Activated CD4-positive, alpha-beta memory T cell treated with anti-CD3 and anti-CD28 coated beads, Interleukin-2, amount 10 ng/mL, durations not matched to agents 7 days and 5 days (primary cell): ENCODE measurements at regions of chr20 and their contacts with region 1.

Region 1: GRCh38 chr20:35994994-35995453 is 26.6 kb downstream of the CNBD2 start:
- DNase-seq: peak; percentile 78
- H3K4me3 Mint-ChIP-seq: no peak overlapping the region
- H3K27ac Mint-ChIP-seq: no peak overlapping the region
- H3K4me1 Mint-ChIP-seq: peaks cover 6% of the 10 kb centered on the region
- H3K27me3 Mint-ChIP-seq: peaks cover 8% of the 10 kb centered on the region

Region 2: DNA sequence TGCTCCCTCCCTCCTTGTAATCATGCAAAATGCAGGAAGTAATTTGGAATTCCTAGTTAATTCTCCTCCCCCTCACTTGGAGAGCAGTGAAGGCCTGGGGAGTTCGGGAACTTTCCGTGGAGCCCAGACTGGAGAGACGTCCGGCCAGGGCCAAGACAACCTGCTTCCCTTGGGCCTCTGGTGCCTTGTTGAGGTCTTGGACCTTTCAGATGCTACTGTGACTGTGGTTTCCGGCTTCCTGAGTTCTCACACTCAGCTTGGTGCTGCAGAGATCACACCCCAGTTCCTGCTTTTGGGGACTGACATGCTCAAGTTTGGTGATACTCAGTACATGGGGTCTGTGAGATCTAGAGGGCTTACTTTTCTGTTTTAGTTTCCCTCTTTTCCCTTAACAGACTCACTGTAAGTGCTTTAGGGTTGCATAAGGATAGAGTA is 227.0 kb before region 1 on chr20:
- CTCF ChIA-PET with region 1: no interaction called
- POLR2A ChIA-PET with region 1: no interaction called
- DNase-seq: peak; percentile 79
- H3K4me3 Mint-ChIP-seq: peak overlapping the region; percentile 69
- H3K27ac Mint-ChIP-seq: peak overlapping the region; percentile 98
- H3K4me1 Mint-ChIP-seq: peaks cover 45% of the 10 kb centered on the region
- H3K27me3 Mint-ChIP-seq: no peaks in the 10 kb centered on the region

Region 3: DNA sequence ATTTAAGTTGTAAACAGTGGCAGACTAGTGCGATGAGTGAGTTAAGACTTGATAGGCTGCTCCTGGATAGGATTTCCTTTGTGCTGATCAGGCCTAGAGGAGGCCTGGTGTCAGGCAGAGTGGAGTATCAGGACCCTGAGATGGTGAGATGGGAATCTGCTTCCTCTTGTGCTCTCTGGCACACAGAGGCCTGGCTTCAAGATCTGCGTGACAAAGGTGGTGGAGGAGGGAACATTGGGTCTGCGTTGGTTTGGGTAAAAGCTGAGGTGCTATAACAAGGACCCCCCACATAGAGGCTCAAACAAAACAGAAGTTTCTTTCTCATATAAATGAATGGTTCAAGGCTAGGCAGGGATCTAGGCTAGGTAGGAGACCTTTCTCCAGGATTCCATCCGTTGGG is 61.0 kb before region 1 on chr20:
- CTCF ChIA-PET with region 1: no interaction called
- POLR2A ChIA-PET with region 1: no interaction called
- DNase-seq: no peak
- H3K4me3 Mint-ChIP-seq: no peak overlapping the region
- H3K27ac Mint-ChIP-seq: no peak overlapping the region
- H3K4me1 Mint-ChIP-seq: peaks cover 16% of the 10 kb centered on the region
- H3K27me3 Mint-ChIP-seq: no peaks in the 10 kb centered on the region

Region 4: GRCh38 chr20:35954200-35954906 is 40.7 kb before region 1 on chr20 and contains the start of gene SCAND1:
- CTCF ChIA-PET with region 1: interaction called, 27 read pairs
- POLR2A ChIA-PET with region 1: interaction called, 11 read pairs
- DNase-seq: peak; percentile 97
- H3K4me3 Mint-ChIP-seq: peak within 1 kb of the TSS; percentile 99
- H3K27ac Mint-ChIP-seq: peak within 1 kb of the TSS; percentile 100
- H3K4me1 Mint-ChIP-seq: peaks cover 25% of the 10 kb centered on the region
- H3K27me3 Mint-ChIP-seq: no peaks in the 10 kb centered on the region
- total RNA-seq, gene SCAND1: 65.5 to 70.0 TPM

Region 5: DNA sequence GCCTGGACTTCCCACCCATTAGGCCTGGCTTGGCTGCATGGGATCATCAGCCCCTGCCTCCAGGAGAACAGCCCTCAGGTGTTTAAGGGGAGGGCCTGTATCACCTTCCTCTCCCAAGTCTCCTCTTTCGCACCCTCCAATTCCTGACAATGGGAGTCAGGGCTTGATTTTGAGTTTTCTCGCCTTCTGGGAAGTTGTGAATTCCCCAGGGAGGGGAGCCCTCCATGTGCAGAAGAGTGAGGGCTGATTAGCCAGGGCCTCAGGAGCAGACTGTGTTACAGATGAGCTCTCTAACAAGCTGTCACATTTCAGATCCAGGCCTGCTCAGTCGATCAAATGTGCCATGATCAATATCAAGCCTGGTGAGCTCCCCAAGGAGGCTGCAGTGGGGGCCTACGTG is 15.8 kb after region 1 on chr20:
- CTCF ChIA-PET with region 1: interaction called, 10 read pairs
- POLR2A ChIA-PET with region 1: no interaction called
- DNase-seq: no peak
- H3K4me3 Mint-ChIP-seq: no peak overlapping the region
- H3K27ac Mint-ChIP-seq: no peak overlapping the region
- H3K4me1 Mint-ChIP-seq: no peaks in the 10 kb centered on the region
- H3K27me3 Mint-ChIP-seq: no peaks in the 10 kb centered on the region

Region 6: GRCh38 chr20:36098364-36098763 is 103.3 kb after region 1 on chr20:
- CTCF ChIA-PET with region 1: interaction called, 16 read pairs
- POLR2A ChIA-PET with region 1: no interaction called
- DNase-seq: no peak
- H3K4me3 Mint-ChIP-seq: no peak overlapping the region
- H3K27ac Mint-ChIP-seq: no peak overlapping the region
- H3K4me1 Mint-ChIP-seq: peaks cover 14% of the 10 kb centered on the region
- H3K27me3 Mint-ChIP-seq: peaks cover 16% of the 10 kb centered on the region

Region 7: GRCh38 chr20:36141310-36141709 is 146.3 kb after region 1 on chr20:
- CTCF ChIA-PET with region 1: interaction called, 244 read pairs
- POLR2A ChIA-PET with region 1: interaction called, 5 read pairs
- DNase-seq: no peak
- H3K4me3 Mint-ChIP-seq: no peak overlapping the region
- H3K27ac Mint-ChIP-seq: no peak overlapping the region
- H3K4me1 Mint-ChIP-seq: peaks cover 4% of the 10 kb centered on the region
- H3K27me3 Mint-ChIP-seq: peaks cover 13% of the 10 kb centered on the region

Region 8: DNA sequence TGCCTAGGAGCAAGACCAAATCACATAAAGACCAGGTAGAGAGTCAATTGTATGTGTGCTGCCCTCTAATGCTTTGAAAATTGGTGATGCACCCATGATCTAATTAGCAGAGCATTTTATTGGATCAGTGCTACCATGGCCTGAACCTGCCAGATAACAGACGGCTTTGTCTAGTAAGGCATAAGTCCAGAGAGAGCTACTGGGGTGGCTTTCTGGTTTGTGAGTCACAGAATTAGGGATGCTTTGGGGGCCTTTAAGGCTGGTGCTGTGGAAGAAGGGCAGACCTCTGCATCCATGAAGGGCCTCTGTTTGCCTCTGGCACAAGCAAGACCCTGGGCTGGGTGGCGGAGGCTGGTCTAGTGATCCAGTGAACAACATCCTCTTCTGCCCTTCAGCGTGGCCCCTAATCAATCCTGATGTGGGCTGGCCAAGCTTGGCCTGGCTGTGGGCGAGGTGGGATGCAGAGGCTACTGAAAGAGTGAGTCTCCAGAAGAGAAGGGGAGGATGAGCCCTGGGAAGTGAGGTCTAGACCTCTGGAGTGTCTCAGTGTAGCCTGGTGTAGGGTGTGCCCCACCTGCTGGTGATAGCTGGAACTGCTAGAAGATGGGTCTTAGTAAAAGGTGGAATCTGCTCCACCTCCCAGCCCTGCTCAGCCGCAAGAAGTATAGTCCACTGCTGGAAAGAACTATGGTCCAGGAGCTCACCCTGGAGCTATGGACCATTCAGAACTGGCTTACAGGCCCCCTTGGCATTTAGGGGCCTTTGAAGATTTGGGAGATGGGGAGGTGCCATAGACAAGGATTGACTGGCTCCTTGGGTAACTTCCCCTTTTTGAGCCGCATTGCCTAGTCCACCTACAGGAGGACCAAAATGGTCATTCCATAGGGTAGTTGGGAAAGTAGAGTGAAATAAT is 204.6 kb after region 1 on chr20:
- CTCF ChIA-PET with region 1: interaction called, 18 read pairs
- POLR2A ChIA-PET with region 1: no interaction called
- DNase-seq: peak; percentile 74
- H3K4me3 Mint-ChIP-seq: no peak overlapping the region
- H3K27ac Mint-ChIP-seq: no peak overlapping the region
- H3K4me1 Mint-ChIP-seq: peaks cover 4% of the 10 kb centered on the region
- H3K27me3 Mint-ChIP-seq: peaks cover 25% of the 10 kb centered on the region

Region 9: DNA sequence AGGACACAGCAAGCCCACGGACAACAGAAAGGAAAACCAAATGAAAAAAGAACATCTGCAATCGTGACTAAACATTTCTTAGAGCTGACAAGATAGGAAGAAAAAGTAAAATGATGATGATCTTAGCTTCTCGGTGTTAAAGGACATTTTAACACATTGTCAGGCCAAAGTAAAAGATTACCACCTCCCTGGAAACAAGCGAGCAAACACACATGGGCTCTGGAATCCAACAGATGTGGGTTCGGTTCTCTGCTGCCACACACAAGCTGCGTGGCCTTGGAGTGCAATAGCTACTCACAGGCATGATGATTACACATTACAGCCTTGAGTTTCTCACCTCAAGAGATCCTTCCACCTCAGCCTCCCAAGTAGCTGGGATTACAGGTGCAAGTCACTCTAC is 233.7 kb after region 1 on chr20:
- CTCF ChIA-PET with region 1: no interaction called
- POLR2A ChIA-PET with region 1: no interaction called
- DNase-seq: no peak
- H3K4me3 Mint-ChIP-seq: no peak overlapping the region
- H3K27ac Mint-ChIP-seq: no peak overlapping the region
- H3K4me1 Mint-ChIP-seq: peaks cover 11% of the 10 kb centered on the region
- H3K27me3 Mint-ChIP-seq: peaks cover 14% of the 10 kb centered on the region

Region 10: GRCh38 chr20:36259177-36260061 is 264.4 kb after region 1 on chr20:
- CTCF ChIA-PET with region 1: no interaction called
- POLR2A ChIA-PET with region 1: no interaction called
- DNase-seq: no peak
- H3K4me3 Mint-ChIP-seq: no peak overlapping the region
- H3K27ac Mint-ChIP-seq: no peak overlapping the region
- H3K4me1 Mint-ChIP-seq: no peaks in the 10 kb centered on the region
- H3K27me3 Mint-ChIP-seq: no peaks in the 10 kb centered on the region